Right lobe of liver (tissue), 6 donors: ENCODE measurements at regions of chr3 and their contacts with region 1.

Region 1: GRCh38 chr3:42539869-42540714 is 37.6 kb downstream of the VIPR1 start:
- DNase-seq: peak in 2 of 3 donors; percentile 49 to 73
- ATAC-seq: peak; percentile 34 to 62 (median 60)
- H3K4me3 ChIP-seq: no peak overlapping the region
- H3K27ac ChIP-seq: no peak overlapping the region
- H3K4me1 ChIP-seq: peaks cover 0 to 14% (median 7%) of the 10 kb centered on the region in 4 donors
- H3K27me3 ChIP-seq: no peaks in the 10 kb centered on the region
- CTCF ChIP-seq: peak; percentile 65 to 80 (median 78)
- POLR2A ChIP-seq: no peak

Region 2: DNA sequence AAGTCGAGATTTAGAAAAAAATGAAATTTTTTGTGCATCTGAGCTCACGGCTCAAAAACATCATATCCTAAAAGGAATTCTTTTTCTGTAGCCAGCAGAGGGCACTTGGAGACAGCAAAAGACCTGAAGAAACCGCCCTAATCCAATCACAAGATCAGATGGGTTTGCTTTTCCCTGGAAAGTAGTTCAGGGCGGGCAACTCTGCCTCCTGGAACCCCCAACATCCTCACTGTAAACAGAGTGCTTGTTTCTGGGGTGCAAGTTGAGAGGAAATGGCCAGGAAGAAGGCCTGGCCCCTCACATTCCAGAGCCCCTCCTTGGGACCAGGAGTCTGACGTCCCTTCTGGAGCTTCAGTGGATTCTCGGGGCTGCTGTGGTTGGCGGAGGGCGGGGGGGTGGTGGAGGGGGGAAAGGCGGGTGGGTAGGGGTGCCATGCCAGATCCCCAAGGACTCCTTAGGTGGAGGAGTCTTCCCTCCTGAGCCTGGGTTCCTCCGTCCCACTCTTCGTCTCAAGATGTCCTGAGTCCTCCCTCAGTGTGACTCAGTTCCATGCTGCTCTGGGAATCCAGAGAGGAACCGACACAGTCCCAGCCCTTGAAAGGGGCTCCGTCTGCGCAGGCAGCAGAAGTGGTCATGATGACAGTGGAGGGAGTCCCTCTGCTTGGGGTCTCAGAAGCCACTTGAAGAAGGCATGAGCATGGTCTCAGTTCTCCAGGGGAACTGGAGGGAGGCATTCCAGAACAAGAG is 310.0 kb before region 1 on chr3:
- intact Hi-C with region 1: loop called in 1 of 2 experiments (anchors 10 kb)
- DNase-seq: no peak
- ATAC-seq: peak; percentile 63 to 73 (median 70)
- H3K4me3 ChIP-seq: no peak overlapping the region
- H3K27ac ChIP-seq: no peak overlapping the region
- H3K4me1 ChIP-seq: peaks cover 0 to 27% (median 4%) of the 10 kb centered on the region in 4 donors
- H3K27me3 ChIP-seq: no peaks in the 10 kb centered on the region
- CTCF ChIP-seq: peak; percentile 55 to 60 (median 58)
- POLR2A ChIP-seq: no peak

Region 3: DNA sequence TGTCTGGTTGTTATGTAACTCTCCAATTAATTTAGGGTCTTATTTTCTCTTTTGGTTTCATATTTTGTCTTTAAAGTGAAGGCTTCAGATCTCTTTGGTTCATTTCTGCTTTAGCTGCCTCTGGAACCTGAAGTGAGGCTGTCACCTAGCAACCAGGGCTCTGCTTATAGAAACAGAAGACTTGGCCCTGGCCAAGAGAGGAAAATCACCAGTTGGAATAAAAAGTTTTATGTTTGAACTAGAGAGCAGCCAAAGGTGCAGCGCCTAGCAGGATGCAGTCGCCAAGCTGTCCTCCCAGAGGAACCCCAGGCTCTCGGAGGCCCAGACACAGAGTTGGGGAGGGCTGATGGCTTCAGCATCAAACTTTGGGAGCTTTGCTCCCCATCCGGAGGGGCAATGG is 170.8 kb before region 1 on chr3:
- intact Hi-C with region 1: no loop called
- DNase-seq: no peak
- ATAC-seq: peak in 1 of 4 donors; percentile 24
- H3K4me3 ChIP-seq: no peak overlapping the region
- H3K27ac ChIP-seq: no peak overlapping the region
- H3K4me1 ChIP-seq: no peaks in the 10 kb centered on the region
- H3K27me3 ChIP-seq: no peaks in the 10 kb centered on the region
- CTCF ChIP-seq: no peak
- POLR2A ChIP-seq: no peak